ENCODE measurements at regions of chr11 and their contacts with region 1.

Region 1: DNA sequence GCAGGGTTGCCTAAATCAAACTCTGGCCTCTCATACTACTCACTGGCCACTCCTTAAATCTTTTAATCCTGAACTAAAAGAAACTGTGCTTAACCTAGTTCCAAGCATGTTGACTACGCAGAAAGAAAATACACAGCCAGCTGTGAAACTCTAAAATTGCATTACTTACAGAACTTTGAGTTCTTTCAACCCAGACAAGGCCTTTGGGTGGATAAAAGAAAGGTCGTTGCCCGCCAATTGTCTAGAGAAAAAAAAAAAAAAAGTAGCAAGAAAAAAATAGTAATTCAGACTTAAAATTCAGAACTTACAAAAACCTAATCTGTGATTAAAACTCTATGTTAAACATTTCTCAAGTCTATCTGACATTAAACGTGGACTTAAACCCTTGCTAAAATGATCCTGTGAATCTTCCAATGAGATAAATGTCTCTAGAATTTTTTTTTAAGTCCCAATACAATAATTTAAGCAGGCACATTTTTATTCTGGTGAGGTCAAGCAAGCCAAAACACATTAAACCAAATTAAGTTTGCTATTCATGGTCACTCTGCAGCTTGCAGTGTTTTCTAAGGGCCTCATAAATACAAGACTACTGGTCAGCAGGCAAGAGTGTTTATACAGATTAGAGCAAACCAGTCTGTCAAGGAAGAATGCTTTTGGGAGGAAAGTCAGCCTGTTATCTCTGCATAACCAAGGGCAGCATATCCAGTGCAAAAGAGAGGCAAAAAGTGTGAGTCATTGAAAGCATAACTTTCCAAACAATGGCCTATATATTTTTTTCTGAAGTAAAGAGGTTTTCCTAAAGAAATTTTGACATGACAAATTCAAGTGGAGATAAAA is 29.5 kb upstream of the CCDC34 start:
- DNase-seq: peak; percentile 25 to 88
- H3K4me3 ChIP-seq: no peak overlapping the region; the same call in 1 of the 2 replicates
- H3K27ac ChIP-seq: peak overlapping the region; percentile 66
- H3K4me1 ChIP-seq: peaks cover 75% of the 10 kb centered on the region
- H3K27me3 ChIP-seq: no peaks in the 10 kb centered on the region
- CTCF ChIP-seq: no peak

Region 2: DNA sequence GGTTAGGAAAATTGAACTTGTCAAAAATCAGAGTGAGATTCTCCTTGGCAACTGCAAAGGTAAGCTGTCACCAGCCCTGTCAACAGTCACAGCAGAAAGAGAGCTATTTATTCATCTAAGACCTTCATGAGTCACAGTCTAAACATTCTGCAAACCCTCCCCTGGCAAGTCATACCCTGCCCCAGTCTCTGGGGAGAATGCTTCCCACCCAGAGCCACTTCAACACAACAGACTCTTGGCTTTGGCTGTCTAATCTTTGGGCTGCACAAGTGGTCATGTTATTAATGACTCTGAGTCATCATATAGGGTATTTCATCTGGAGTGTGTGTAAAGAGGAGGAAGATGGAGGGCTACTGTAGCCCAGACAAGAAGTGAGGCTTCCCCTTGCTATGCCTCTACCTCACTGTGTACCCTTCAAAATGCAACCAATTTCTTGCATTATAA is 182.9 kb before region 1 on chr11:
- CTCF ChIA-PET with region 1: no interaction called
- POLR2A ChIA-PET with region 1: no interaction called
- intact Hi-C with region 1: loop called (anchors 10 kb)
- DNase-seq: peak; percentile 79 to 95
- H3K4me3 ChIP-seq: no peak overlapping the region
- H3K27ac ChIP-seq: peak overlapping the region; percentile 30
- H3K4me1 ChIP-seq: peaks cover 52% of the 10 kb centered on the region
- H3K27me3 ChIP-seq: no peaks in the 10 kb centered on the region
- CTCF ChIP-seq: no peak

Region 3: GRCh38 chr11:27464154-27464759 is 71.8 kb after region 1 on chr11:
- CTCF ChIA-PET with region 1: no interaction called
- POLR2A ChIA-PET with region 1: no interaction called
- intact Hi-C with region 1: loop called (anchors 1 kb)
- DNase-seq: peak; percentile 47 to 97
- H3K4me3 ChIP-seq: peak overlapping the region; percentile 34; the same call in 1 of the 2 replicates
- H3K27ac ChIP-seq: peak overlapping the region; percentile 97
- H3K4me1 ChIP-seq: peaks cover 69% of the 10 kb centered on the region
- H3K27me3 ChIP-seq: no peaks in the 10 kb centered on the region
- CTCF ChIP-seq: no peak